Posterior vena cava (tissue), 2 donors: ENCODE measurements at regions of chr18 and their contacts with region 1.

Region 1: DNA sequence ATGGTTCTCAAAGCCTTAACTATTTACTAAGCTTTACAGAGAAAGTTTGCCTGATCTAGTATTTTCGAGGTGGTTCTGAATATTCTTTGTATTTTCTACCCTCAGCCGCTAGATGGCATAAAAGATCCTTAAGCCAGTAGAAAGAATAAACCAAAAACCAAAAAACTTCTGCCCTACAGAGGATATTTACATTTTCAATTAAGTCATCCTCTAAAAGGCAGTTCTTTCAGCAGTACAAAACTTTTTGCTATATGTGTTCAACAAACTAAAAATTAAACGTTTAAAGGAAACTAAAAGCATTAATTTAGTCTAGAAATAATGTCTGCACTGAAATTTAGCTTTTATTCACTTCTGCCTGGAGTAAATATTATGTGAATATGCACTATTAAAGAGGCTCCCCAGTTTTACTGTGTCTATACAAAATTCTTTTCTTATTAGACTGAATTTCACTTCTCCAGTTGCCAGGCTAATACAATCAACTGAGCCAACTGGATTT is 297.5 kb downstream of the PIEZO2 start:
- DNase-seq: no peak

Region 2: GRCh38 chr18:11040823-11041656 is 189.2 kb after region 1 on chr18:
- intact Hi-C with region 1: loop called in 1 of 2 experiments (anchors 5 kb)
- DNase-seq: no peak

Region 3: GRCh38 chr18:11149441-11150270 is 297.8 kb after region 1 on chr18 and contains the start of gene PIEZO2:
- intact Hi-C with region 1: loop called (anchors 10 kb)
- DNase-seq: peak; percentile 84
- total RNA-seq, gene PIEZO2: 4.8 to 7.5 TPM

Region 4: GRCh38 chr18:11553098-11553940 is 701.4 kb after region 1 on chr18:
- intact Hi-C with region 1: loop called in 1 of 2 experiments (anchors 10 kb)
- DNase-seq: no peak

Region 5: DNA sequence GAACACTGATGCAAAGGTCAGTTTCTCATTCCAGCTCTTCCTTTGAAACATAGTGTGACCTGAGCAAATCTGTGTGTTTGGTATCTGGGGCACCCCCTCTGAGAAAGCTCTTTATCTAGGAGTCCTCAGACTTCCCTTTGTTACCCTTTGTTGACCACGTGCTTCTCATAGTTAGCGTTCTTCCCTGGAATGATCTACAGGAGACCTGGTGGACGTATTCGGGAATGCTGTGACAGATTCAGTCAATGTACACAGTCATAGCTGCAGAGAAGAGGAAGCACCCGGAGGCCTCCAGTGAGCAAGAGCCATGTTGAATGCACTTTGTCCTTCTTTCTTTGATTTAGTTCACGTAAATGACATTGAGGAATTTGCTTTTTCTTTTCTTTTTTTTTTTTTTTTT is 988.6 kb after region 1 on chr18:
- intact Hi-C with region 1: no loop called
- DNase-seq: no peak